ENCODE measurements at regions of chr14 and their contacts with region 1.

Region 1: DNA sequence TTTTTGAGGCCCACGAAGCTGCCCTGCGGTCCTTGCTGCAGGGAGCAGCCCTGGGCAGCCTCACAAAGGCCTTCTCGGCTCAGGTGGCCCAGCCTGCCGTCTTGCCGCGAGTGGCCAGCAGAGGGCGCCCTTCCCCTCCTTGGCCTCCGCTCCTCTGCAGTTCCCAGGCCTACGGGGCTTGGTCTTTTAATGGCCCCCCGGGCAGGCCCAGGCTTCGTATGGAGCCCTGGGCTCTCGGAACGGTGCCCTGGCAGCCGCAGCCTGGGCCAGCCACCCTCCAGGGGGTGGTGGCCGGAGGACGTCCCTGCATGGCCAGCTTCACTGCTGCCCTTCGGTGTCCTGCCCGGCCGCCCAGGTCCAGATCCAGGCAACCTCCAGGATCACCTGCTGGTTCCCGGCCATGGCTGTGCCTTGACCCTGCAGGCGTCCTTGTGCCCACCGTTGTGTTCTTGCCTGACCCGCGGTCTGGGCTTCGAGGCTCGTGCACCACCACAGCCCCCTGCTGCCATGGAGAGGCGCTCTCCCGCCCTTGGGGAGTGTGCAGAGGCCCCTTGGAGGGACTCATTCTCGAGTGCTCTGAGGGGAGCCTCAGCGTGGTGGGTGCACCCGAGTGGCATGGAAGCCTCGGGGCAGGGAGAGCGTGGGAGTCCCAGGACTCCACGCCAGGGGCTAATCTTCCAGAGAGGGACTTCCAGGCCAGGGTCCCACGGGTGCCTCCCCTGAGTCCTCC is 9.4 kb downstream of the ASPG start:
- DNase-seq: peak; percentile 47 to 95 (median 75)

Region 2: GRCh38 chr14:104064003-104064402 is 30.9 kb before region 1 on chr14:
- intact Hi-C with region 1: no loop called
- DNase-seq: no peak

Region 3: DNA sequence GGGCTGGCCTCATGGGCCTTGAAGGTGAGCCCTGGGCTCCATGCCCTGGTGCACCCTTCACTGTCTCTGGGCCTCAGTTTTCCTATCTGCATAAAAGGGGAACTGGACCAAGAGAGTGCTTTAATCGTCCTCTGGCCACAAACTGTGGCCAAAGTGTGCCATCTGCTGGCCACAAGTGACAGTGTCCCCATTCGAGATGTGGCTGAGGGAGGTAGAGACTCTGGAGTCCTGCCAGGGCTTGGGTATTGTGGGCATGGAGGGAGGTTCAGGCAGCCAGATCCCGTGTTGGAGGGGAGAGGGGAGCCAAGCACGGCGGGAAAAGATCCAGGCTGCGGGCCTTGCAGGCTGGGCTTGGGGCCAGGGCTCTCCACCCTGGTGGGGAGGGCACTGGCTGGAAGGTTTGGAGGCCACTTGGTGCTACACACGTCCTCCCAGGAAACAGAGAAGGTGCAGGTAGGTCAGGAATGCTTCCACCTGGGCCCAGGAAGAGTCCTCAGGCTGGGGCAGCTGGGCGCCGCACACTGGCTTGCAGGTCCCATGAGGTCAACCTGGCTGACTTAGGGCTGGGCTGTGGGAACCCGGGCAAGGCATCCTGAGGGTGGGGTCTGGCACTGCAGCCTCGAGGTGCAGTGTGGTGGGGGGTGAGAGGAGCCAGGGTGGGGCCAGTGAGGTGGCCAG is 36.2 kb after region 1 on chr14:
- intact Hi-C with region 1: loop called (anchors 5 kb)
- DNase-seq: peak in 8 of 10 donors; percentile 31 to 87 (median 43)